ENCODE measurements at regions of chr2 and their contacts with region 1.

Region 1: GRCh38 chr2:113203901-113204519 is 30.2 kb downstream of the PSD4 start:
- DNase-seq: peak; percentile 83
- CTCF ChIP-seq: peak; percentile 85

Region 2: GRCh38 chr2:112712903-112713584 is 491.0 kb before region 1 on chr2:
- CTCF ChIA-PET with region 1: no interaction called
- POLR2A ChIA-PET with region 1: no interaction called
- DNase-seq: no peak
- CTCF ChIP-seq: no peak

Region 3: DNA sequence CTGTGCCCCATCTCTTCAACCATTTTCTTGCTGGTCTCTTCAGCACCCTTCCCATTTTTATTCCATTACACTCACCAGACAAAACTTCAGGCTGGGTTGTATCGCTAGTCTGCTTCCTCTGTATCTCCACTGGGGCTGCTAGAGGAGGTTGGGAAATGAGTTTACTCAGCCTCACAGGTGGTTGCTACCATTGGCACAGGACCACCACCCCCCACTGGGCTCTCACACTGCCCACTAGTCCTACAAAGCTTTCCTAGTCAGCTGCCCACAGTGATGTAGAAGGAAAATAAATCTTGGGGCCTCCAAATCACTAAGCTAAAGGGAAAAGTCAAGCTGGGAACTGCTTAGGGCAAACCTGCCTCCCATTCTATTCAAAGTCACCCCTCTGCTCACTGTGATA is 355.2 kb before region 1 on chr2:
- CTCF ChIA-PET with region 1: no interaction called
- POLR2A ChIA-PET with region 1: no interaction called
- DNase-seq: no peak
- CTCF ChIP-seq: no peak

Region 4: GRCh38 chr2:113116100-113116958 is 87.7 kb before region 1 on chr2:
- CTCF ChIA-PET with region 1: no interaction called
- POLR2A ChIA-PET with region 1: no interaction called
- DNase-seq: peak; percentile 21
- CTCF ChIP-seq: no peak

Region 5: GRCh38 chr2:113173542-113174395 is 30.2 kb before region 1 on chr2 and contains the start of gene PSD4:
- CTCF ChIA-PET with region 1: interaction called, 44 read pairs
- POLR2A ChIA-PET with region 1: interaction called, 3 read pairs
- DNase-seq: peak; percentile 90
- CTCF ChIP-seq: no peak

Region 6: DNA sequence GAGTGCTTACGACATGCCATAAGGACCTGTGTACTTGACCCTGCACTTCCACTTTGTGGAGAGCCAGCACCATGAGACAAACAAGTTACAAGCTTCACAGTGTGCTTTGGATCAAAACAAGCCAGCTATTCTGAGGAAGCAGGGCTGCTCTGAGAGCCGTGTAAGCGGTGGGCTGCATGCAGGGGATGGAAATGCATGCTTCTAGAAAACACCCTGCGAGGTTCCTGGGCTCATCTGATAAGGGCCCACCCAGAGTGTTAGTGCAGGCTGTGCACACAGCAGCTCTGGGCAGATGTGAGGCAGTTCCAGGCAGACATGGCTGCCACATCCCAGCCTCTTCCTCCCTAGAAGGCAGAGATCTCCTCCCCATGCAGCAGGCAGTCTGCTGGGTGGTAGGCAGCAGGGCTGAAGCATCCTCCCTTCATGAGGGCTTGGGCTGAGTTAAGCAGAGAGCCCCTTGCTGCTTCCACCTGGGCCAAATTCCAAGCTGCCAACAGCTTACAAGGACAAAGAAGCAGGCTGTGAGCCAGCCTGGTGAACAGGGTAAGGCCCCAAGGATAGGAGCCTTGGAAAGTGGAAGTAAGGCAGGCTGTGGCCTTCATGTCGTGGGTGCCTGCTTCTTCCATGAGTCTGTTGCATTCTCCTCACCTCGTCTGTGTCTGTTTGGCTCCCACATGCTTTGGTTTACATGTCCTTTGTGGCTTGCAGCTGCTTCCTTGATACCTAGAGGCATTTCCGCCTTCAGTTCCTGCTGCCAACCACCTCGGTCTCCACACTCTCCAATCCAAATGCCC is 22.6 kb before region 1 on chr2:
- CTCF ChIA-PET with region 1: interaction called, 44 read pairs
- POLR2A ChIA-PET with region 1: no interaction called
- DNase-seq: no peak
- CTCF ChIP-seq: no peak

Region 7: DNA sequence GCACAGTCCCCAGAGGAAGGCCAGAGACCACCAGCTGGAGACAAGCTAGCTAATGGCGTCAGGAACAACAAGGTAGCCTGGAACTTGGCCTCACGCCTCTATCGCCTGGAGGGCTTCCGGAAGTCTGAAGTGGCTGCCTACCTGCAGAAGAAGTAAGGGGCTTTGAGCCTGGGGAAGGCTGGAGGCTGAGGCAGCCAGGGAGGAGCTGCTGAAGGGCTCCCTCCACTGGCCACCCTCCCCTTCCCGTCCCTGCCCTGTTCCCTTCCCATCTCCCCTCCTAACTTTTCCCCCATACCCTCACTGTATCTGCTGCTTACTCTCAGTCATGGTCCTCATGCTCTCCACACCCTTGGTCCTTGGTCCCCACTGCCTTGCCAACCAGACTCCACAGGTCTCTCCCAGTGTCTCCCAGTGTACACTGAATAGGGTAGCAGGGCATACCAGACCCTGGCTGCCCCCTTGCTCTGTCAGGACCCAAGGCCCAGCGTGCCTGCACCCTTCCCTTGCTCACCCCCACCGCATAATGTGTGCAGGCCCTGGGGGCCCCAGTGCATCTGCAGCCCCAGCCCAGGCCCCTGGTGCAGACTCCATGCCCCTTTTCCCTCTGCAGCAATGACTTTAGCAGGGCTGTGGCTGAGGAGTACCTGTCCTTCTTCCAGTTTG is 11.4 kb before region 1 on chr2:
- CTCF ChIA-PET with region 1: interaction called, 34 read pairs
- POLR2A ChIA-PET with region 1: interaction called, 3 read pairs
- DNase-seq: no peak
- CTCF ChIP-seq: peak; percentile 7

Region 8: GRCh38 chr2:113219889-113220641 is 16.1 kb after region 1 on chr2:
- CTCF ChIA-PET with region 1: interaction called, 27 read pairs
- POLR2A ChIA-PET with region 1: no interaction called
- DNase-seq: no peak
- CTCF ChIP-seq: no peak

Region 9: GRCh38 chr2:113233593-113234550 is 29.9 kb after region 1 on chr2:
- CTCF ChIA-PET with region 1: interaction called, 10 read pairs
- POLR2A ChIA-PET with region 1: no interaction called
- DNase-seq: peak; percentile 43
- CTCF ChIP-seq: peak; percentile 11